GM10248 (cell line): ENCODE measurements at regions of chr17 and their contacts with region 1.

Region 1: GRCh38 chr17:28398280-28398981 is 7.6 kb downstream of the SLC46A1 start:
- DNase-seq: no peak
- CTCF ChIP-seq: no peak

Region 2: GRCh38 chr17:27956601-27957445 is 441.6 kb before region 1 on chr17:
- CTCF ChIA-PET with region 1: no interaction called
- POLR2A ChIA-PET with region 1: no interaction called
- DNase-seq: no peak
- CTCF ChIP-seq: no peak

Region 3: GRCh38 chr17:28388072-28388471 is 10.4 kb before region 1 on chr17:
- CTCF ChIA-PET with region 1: interaction called, 16 read pairs
- POLR2A ChIA-PET with region 1: no interaction called
- DNase-seq: no peak
- CTCF ChIP-seq: no peak